ENCODE measurements at regions of chr11 and their contacts with region 1.

Region 1: GRCh38 chr11:94762208-94762607 is 5.9 kb upstream of the AMOTL1 start:
- DNase-seq: no peak
- H3K4me3 ChIP-seq: no peak overlapping the region
- H3K27ac ChIP-seq: no peak overlapping the region
- H3K4me1 ChIP-seq: peaks cover 0 to 1% (median 0%) of the 10 kb centered on the region in 6 donors
- H3K27me3 ChIP-seq: peaks cover 0 to 5% (median 0%) of the 10 kb centered on the region in 7 donors
- CTCF ChIP-seq: peak in 8 of 11 experiments; percentile 28 to 53 (median 46)
- POLR2A ChIP-seq: no peak

Region 2: GRCh38 chr11:94623120-94623735 is 139.0 kb before region 1 on chr11:
- intact Hi-C with region 1: loop called (anchors 5 kb)
- DNase-seq: no peak
- H3K4me3 ChIP-seq: no peak overlapping the region
- H3K27ac ChIP-seq: no peak overlapping the region
- H3K4me1 ChIP-seq: peaks cover 0 to 10% (median 0%) of the 10 kb centered on the region in 6 donors
- H3K27me3 ChIP-seq: no peaks in the 10 kb centered on the region
- CTCF ChIP-seq: peak; percentile 32 to 86 (median 65)
- POLR2A ChIP-seq: no peak